Activated CD4-positive, alpha-beta T cell treated with anti-CD3 and anti-CD28 coated beads for 36 hours (primary cell): ENCODE measurements at regions of chr20 and their contacts with region 1.

Region 1: GRCh38 chr20:973785-974194 is 28.3 kb downstream of the RSPO4 start:
- DNase-seq: peak; percentile 63
- ATAC-seq: peak; percentile 95
- H3K4me3 Mint-ChIP-seq: no peak overlapping the region
- H3K27ac Mint-ChIP-seq: peak overlapping the region; percentile 66
- H3K4me1 Mint-ChIP-seq: peaks cover 2% of the 10 kb centered on the region
- H3K27me3 Mint-ChIP-seq: no peaks in the 10 kb centered on the region

Region 2: GRCh38 chr20:956330-956951 is 17.3 kb before region 1 on chr20:
- CTCF ChIA-PET with region 1: interaction called, 17 read pairs
- POLR2A ChIA-PET with region 1: no interaction called
- intact Hi-C with region 1: no loop called
- DNase-seq: peak; percentile 84
- ATAC-seq: peak; percentile 89
- H3K4me3 Mint-ChIP-seq: no peak overlapping the region
- H3K27ac Mint-ChIP-seq: no peak overlapping the region
- H3K4me1 Mint-ChIP-seq: no peaks in the 10 kb centered on the region
- H3K27me3 Mint-ChIP-seq: peaks cover 20% of the 10 kb centered on the region

Region 3: DNA sequence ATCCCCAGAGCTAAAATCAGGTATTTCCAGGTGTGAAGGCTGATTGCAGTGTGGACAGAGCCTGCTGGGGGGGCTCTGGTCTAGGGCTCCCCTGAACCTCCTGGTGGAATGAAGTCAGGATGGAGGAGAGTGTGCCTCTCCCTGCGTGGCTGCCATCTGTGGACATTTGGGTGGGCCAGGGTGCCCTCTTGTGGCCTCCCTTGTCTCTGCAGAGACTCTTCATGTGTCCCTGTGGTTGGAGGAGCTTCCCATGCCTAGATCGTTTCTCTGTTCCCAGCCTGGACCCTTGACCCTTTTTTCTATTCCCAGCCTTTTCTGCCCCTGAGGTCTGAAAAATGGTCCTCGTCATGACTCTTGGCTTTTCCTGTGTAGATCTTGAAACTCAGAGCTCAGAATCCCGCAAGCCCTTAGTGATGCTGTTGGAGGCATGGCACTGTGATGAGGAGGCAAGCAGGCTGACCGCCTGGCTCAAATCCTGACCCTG is 134.7 kb after region 1 on chr20:
- CTCF ChIA-PET with region 1: interaction called, 5 read pairs
- POLR2A ChIA-PET with region 1: no interaction called
- intact Hi-C with region 1: loop called (anchors 1 to 10 kb)
- DNase-seq: peak; percentile 76
- ATAC-seq: peak; percentile 81
- H3K4me3 Mint-ChIP-seq: no peak overlapping the region
- H3K27ac Mint-ChIP-seq: no peak overlapping the region
- H3K4me1 Mint-ChIP-seq: no peaks in the 10 kb centered on the region
- H3K27me3 Mint-ChIP-seq: no peaks in the 10 kb centered on the region

Region 4: GRCh38 chr20:1185790-1186334 is 212.1 kb after region 1 on chr20:
- CTCF ChIA-PET with region 1: no interaction called
- POLR2A ChIA-PET with region 1: no interaction called
- intact Hi-C with region 1: loop called (anchors 5 to 10 kb)
- DNase-seq: peak; percentile 79
- ATAC-seq: peak; percentile 82
- H3K4me3 Mint-ChIP-seq: peak overlapping the region; percentile 32
- H3K27ac Mint-ChIP-seq: no peak overlapping the region
- H3K4me1 Mint-ChIP-seq: peaks cover 6% of the 10 kb centered on the region
- H3K27me3 Mint-ChIP-seq: peaks cover 24% of the 10 kb centered on the region